H1 (cell line): ENCODE measurements at regions of chr21 and their contacts with region 1.

Region 1: DNA sequence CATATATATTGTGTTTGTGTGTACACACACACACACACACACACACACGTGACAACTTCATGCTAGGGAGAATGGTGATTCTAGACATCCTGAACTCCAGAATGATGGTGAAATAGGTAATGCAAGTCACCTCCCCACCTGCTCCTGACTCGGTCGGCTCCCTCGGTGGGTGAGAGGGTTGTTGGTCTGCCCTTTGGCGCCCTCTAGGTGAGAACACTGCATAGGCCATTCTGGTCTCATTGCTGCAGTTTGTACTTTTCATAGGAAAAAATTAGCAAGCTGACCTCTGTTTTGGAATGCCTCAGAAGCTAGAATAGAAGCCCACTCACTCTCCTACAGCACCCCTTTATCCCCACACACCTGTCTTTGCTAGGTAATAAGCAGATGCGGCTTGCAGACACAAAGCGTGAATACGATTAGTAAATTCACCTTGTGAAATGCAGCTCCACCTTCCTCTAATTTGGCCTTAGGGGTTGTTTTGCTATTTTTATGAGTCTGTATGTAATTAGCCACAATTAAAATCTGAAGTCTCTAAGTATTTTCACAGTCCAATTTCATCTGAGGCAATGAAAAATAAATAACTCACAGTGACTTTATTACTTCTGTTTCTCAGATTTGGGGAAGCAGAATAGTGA is 130.0 kb upstream of the KCNJ15 start:
- DNase-seq: peak in 1 of 2 experiments; percentile 84
- H3K4me3 ChIP-seq: no peak overlapping the region
- H3K27ac ChIP-seq: no peak overlapping the region
- H3K4me1 ChIP-seq: no peaks in the 10 kb centered on the region
- H3K27me3 ChIP-seq: no peaks in the 10 kb centered on the region
- CTCF ChIP-seq: peak; percentile 81 to 88 (median 86)
- EP300 ChIP-seq: no peak
- POLR2A ChIP-seq: no peak
- RAD21 ChIP-seq: peak; percentile 93 to 94

Region 2: DNA sequence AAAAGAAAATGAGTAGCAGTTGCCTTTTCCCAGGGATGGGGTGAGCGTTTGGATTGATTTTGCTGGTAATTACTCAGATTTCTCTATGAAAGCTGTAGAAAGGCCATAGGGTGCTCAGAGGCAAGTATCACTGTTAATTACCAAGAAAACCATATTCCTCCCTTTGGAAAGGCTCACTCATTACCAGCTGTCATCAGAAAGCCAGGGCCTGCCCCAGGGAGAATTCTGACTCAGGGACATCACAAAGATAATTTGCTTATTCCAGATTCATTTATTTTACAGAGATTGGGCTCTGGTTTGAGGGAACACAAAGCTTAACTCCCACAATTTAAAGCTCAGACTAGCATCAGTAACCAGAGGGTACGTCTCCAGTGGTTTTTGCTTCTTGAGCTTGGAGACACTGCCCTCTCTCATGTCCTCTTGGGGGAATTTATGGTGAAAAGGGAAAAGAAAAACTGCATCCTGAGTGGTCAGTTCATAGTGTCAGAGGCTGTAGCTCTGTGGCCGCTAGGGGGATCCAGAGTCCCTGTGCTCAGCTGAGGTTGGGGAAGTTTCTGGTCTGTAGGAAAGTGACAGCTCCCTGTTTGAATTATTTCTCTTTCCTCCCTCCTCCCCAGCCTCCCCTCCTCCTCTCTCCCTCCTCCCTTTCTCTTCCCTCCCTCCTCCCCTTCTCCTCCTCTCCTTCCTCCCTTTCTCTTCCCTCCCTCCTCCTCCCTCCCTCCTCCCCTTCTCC is 414.8 kb before region 1 on chr21:
- CTCF ChIA-PET with region 1: interaction called, 13 read pairs
- POLR2A ChIA-PET with region 1: no interaction called
- DNase-seq: peak; percentile 41 to 77
- H3K4me3 ChIP-seq: no peak overlapping the region
- H3K27ac ChIP-seq: no peak overlapping the region
- H3K4me1 ChIP-seq: peaks cover 0 to 5% (median 0%) of the 10 kb centered on the region in 4 experiments; a peak in 2 of 7 replicates
- H3K27me3 ChIP-seq: no peaks in the 10 kb centered on the region
- CTCF ChIP-seq: peak; percentile 85 to 93 (median 86)
- EP300 ChIP-seq: no peak
- POLR2A ChIP-seq: no peak
- RAD21 ChIP-seq: peak; percentile 89 to 92

Region 3: GRCh38 chr21:37758982-37759381 is 367.8 kb before region 1 on chr21:
- CTCF ChIA-PET with region 1: interaction called, 26 read pairs
- POLR2A ChIA-PET with region 1: no interaction called
- DNase-seq: peak; percentile 38 to 84
- H3K4me3 ChIP-seq: no peak overlapping the region
- H3K27ac ChIP-seq: no peak overlapping the region
- H3K4me1 ChIP-seq: peaks cover 3 to 5% (median 4%) of the 10 kb centered on the region in 4 experiments; a peak in 4 of 7 replicates
- H3K27me3 ChIP-seq: no peaks in the 10 kb centered on the region
- CTCF ChIP-seq: peak; percentile 92 to 97 (median 96)
- EP300 ChIP-seq: no peak
- POLR2A ChIP-seq: no peak
- RAD21 ChIP-seq: peak; percentile 98

Region 4: GRCh38 chr21:37916310-37917051 is 210.3 kb before region 1 on chr21 and contains the start of gene KCNJ6:
- CTCF ChIA-PET with region 1: interaction called, 16 read pairs
- POLR2A ChIA-PET with region 1: no interaction called
- DNase-seq: peak in 1 of 2 experiments; percentile 91
- H3K4me3 ChIP-seq: peak within 1 kb of the TSS; percentile 64 to 76 (median 66)
- H3K27ac ChIP-seq: no peak within 1 kb of the TSS
- H3K4me1 ChIP-seq: peaks cover 3 to 16% (median 8%) of the 10 kb centered on the region in 4 experiments; a peak in 6 of 7 replicates
- H3K27me3 ChIP-seq: peaks cover 9 to 17% (median 16%) of the 10 kb centered on the region in 4 experiments
- CTCF ChIP-seq: peak; percentile 77 to 92 (median 83)
- EP300 ChIP-seq: no peak
- POLR2A ChIP-seq: no peak
- RAD21 ChIP-seq: peak; percentile 83
- total RNA-seq, gene KCNJ6: 0.78 and 1.2 TPM in 2 replicates

Region 5: DNA sequence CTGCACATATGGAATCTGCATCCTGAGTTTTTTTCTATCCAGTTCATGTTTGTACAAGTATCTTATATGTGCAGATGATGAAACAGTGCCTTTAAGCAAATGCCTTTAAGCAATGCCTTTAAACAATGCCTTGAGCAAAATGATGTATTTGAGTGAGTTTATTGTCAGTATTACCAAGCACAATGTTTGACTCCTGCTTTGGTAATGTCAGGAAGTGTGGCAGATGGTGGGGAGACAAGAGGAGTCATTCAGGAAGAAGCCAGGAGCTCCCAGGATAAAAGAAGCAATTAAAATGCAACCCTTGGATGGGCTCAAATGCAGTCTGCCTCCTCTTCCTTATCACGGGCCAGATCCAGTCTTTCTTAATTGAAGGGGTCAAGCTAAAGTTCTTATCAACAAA is 21.3 kb after region 1 on chr21:
- CTCF ChIA-PET with region 1: interaction called, 14 read pairs
- POLR2A ChIA-PET with region 1: no interaction called
- DNase-seq: no peak
- H3K4me3 ChIP-seq: no peak overlapping the region
- H3K27ac ChIP-seq: no peak overlapping the region
- H3K4me1 ChIP-seq: peaks cover 0 to 4% (median 0%) of the 10 kb centered on the region in 4 experiments; a peak in 1 of 7 replicates
- H3K27me3 ChIP-seq: no peaks in the 10 kb centered on the region; a peak in 2 of 7 replicates
- CTCF ChIP-seq: no peak
- EP300 ChIP-seq: no peak
- POLR2A ChIP-seq: no peak
- RAD21 ChIP-seq: no peak

Region 6: DNA sequence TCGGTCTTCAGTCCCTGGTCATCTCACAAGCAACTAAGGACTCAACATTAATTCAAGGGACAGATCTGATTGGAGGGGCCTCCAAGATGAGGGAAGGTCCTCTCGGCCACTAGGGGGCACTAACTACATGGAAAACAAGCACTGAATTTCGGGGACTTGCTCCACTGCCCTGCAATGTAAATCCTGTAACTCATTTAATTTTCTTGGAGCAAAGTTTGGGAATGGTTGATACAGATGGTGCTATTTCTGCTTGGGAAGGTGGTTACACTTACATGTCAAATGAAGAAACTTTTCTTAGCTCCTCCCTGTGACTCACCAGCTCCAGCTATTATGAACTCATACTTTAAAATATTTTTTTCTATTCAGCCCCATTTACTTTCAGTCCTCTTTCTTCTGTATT is 32.6 kb after region 1 on chr21:
- CTCF ChIA-PET with region 1: interaction called, 11 read pairs
- POLR2A ChIA-PET with region 1: no interaction called
- DNase-seq: peak; percentile 39 to 72
- H3K4me3 ChIP-seq: no peak overlapping the region
- H3K27ac ChIP-seq: no peak overlapping the region
- H3K4me1 ChIP-seq: no peaks in the 10 kb centered on the region
- H3K27me3 ChIP-seq: no peaks in the 10 kb centered on the region
- CTCF ChIP-seq: peak; percentile 66 to 88 (median 75)
- EP300 ChIP-seq: no peak
- POLR2A ChIP-seq: no peak
- RAD21 ChIP-seq: peak; percentile 81 to 88

Region 7: DNA sequence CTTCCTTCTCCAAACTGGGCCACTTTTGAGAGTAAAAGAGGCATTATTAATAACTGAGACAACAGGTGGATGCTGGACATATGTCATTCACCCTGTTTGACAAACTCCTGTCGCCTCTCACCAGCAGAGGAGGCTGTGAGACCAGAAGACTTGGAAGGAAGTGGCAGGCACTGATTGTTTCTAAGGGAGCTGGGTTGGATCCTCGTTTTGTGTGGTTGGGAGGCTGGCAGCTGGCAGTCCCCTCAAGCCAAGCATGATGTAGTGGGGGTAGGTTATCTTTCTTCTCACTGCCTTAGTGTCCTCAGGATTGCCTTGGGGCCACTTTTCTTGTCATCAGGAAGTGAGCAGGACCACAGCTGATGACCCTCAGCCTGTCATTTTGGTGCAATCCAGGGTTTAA is 43.5 kb after region 1 on chr21:
- CTCF ChIA-PET with region 1: interaction called, 11 read pairs
- POLR2A ChIA-PET with region 1: interaction called, 3 read pairs
- DNase-seq: peak; percentile 15 to 53
- H3K4me3 ChIP-seq: no peak overlapping the region
- H3K27ac ChIP-seq: no peak overlapping the region
- H3K4me1 ChIP-seq: peaks cover 2 to 10% (median 6%) of the 10 kb centered on the region in 4 experiments; a peak in 5 of 7 replicates
- H3K27me3 ChIP-seq: no peaks in the 10 kb centered on the region; a peak in 1 of 7 replicates
- CTCF ChIP-seq: peak; percentile 68 to 87 (median 75)
- EP300 ChIP-seq: no peak
- POLR2A ChIP-seq: no peak
- RAD21 ChIP-seq: peak; percentile 92 to 95

Region 8: DNA sequence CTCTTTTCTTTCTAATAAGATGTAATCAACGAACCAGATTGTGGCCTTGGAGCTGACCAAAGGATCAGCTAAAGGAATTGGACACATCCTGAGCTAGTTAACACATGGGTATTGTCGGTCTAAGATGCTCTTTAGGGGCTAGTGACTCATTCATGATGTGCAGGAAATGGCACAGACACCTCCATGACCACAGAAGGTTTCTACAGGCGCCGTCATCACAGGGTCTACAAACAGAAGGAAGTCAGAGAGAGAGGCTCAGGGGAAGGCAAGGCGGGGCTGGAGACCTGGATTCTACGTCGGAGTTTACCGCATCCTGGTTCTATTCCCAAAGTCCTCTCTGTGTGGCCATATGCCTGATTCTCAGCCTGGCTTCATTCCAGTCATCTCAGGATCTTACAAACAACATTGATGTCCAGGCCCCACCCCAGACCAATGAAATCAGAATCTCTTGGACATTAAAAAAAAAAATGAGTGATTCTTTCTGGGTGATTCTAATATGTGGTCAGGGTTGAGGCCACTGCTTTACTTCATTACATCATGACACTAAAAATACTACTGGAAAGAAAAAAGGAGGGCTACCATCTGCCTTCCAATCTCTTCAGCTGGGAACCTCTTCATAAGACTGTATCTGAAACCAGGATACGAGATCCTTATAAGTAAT is 118.2 kb after region 1 on chr21:
- CTCF ChIA-PET with region 1: no interaction called
- POLR2A ChIA-PET with region 1: no interaction called
- DNase-seq: no peak
- H3K4me3 ChIP-seq: no peak overlapping the region
- H3K27ac ChIP-seq: no peak overlapping the region
- H3K4me1 ChIP-seq: no peaks in the 10 kb centered on the region
- H3K27me3 ChIP-seq: no peaks in the 10 kb centered on the region
- CTCF ChIP-seq: no peak
- EP300 ChIP-seq: no peak
- POLR2A ChIP-seq: no peak
- RAD21 ChIP-seq: no peak